ENCODE measurements at regions of chr15 and their contacts with region 1.

Region 1: GRCh38 chr15:41660235-41661077 is at the start of gene MGA:
- DNase-seq: peak; percentile 93
- ATAC-seq: peak; percentile 89 to 94 (median 90)
- H3K4me3 ChIP-seq: peak within 1 kb of the TSS; percentile 76
- H3K27ac ChIP-seq: peak within 1 kb of the TSS; percentile 82
- H3K4me1 ChIP-seq: peaks cover 20% of the 10 kb centered on the region
- H3K27me3 ChIP-seq: no peaks in the 10 kb centered on the region
- CTCF ChIP-seq: no peak
- total RNA-seq, gene MGA: 13.1 to 25.8 (median 19.9) TPM

Region 2: GRCh38 chr15:41557673-41558399 is 102.6 kb before region 1 on chr15:
- intact Hi-C with region 1: loop called in 1 of 2 experiments (anchors 10 kb)
- DNase-seq: peak; percentile 61 to 66
- ATAC-seq: peak; percentile 31 to 63 (median 54)
- H3K4me3 ChIP-seq: peak overlapping the region; percentile 68
- H3K27ac ChIP-seq: no peak overlapping the region
- H3K4me1 ChIP-seq: peaks cover 6% of the 10 kb centered on the region
- H3K27me3 ChIP-seq: no peaks in the 10 kb centered on the region
- CTCF ChIP-seq: peak; percentile 60

Region 3: DNA sequence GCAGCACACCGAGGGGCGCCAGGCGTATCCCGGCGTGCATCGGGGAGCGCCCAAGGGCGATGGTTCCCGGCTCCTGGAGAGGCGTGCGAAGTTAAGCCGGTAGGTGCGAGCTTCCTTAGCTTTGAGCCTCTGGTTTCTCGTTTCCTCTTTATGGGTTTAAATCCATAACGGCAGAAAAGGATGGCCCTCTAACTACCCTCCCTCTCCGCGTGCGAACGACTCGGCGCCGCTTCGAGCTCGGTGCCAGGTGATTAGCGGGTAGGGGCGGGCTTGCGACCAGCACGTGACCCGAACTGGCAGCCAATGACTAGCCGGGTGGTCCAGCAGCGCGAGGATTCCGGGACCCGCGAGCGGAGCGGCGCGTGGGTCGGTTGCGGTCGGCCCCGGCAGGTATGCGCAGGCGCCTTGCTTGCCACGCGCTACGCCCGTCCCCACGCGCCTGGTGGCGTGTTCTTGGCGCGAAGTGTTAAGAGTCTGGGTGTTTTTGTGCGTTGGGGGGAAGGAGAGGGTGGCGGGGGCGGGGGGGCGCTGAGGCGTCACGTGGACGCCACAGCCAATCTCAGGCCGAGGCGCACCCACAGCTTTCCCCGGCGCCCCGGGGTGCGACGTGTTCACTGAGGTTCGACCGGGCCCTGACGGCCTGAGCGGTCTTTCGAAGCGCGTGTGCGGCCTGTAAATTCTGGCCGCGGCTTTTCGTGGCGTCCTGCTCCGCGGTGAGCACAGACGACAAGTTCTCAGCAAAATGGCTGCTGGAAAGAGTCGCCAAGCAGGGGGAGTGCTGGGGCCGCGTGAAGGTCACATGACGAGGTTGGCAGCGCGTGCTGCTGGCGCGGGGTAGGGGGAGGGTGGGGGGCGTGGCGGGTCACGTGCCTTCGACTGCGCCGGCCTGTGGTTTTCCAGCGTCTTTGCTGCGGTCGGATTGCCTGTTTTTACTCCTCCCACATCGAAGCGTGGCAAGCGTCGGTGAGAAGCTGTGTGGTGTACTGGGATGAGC is 39.0 kb before region 1 on chr15:
- intact Hi-C with region 1: loop called (anchors 1 to 5 kb)
- DNase-seq: peak; percentile 83 to 91
- ATAC-seq: peak; percentile 90 to 93 (median 91)
- H3K4me3 ChIP-seq: peak overlapping the region; percentile 72
- H3K27ac ChIP-seq: peak overlapping the region; percentile 84
- H3K4me1 ChIP-seq: no peaks in the 10 kb centered on the region
- H3K27me3 ChIP-seq: no peaks in the 10 kb centered on the region
- CTCF ChIP-seq: no peak

Region 4: GRCh38 chr15:41698779-41699178 is 38.3 kb after region 1 on chr15:
- intact Hi-C with region 1: no loop called
- DNase-seq: no peak
- ATAC-seq: no peak
- H3K4me3 ChIP-seq: no peak overlapping the region
- H3K27ac ChIP-seq: no peak overlapping the region
- H3K4me1 ChIP-seq: no peaks in the 10 kb centered on the region
- H3K27me3 ChIP-seq: no peaks in the 10 kb centered on the region
- CTCF ChIP-seq: no peak

Region 5: DNA sequence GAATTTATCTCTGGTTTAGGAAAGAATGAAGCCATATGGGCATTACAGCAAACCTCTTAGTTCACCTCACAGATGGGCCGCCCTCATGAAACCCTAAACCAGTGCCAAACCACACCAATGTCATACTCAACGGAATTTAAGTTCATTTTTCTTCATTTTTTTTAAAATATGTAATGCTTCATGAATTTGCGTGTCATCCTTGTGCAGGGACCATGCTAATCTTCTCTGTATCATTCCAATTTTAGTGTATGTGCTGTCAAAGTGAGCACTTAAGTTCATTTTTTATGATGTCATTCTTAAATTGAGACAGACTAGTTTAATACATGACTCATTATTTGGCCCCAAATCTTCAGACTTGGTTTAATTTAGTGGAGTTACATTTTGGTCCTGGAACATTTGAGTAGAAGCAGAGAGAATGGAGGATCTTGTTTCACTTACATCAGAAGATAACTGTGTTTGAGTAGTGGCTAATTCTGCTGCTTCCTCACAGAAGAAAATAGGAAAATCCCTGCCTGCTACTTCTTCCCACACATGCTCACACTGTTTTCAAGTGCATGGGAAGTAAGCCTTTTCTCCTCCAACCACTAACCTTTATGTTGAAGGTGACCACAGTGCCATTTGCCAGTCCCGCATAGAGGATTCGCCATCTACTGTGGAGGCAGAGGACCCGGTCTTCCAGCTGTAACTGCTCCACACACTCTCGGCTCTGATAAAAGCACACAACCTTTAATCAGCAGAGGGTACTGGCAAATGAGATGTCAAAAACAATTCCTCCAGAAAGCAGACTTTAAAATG is 767.2 kb after region 1 on chr15:
- intact Hi-C with region 1: no loop called
- DNase-seq: no peak
- ATAC-seq: peak; percentile 82 to 92 (median 88)
- H3K4me3 ChIP-seq: no peak overlapping the region
- H3K27ac ChIP-seq: peak overlapping the region; percentile 86
- H3K4me1 ChIP-seq: peaks cover 48% of the 10 kb centered on the region
- H3K27me3 ChIP-seq: no peaks in the 10 kb centered on the region
- CTCF ChIP-seq: no peak